GM12878 (cell line): ENCODE measurements at regions of chr1 and their contacts with region 1.

Region 1: DNA sequence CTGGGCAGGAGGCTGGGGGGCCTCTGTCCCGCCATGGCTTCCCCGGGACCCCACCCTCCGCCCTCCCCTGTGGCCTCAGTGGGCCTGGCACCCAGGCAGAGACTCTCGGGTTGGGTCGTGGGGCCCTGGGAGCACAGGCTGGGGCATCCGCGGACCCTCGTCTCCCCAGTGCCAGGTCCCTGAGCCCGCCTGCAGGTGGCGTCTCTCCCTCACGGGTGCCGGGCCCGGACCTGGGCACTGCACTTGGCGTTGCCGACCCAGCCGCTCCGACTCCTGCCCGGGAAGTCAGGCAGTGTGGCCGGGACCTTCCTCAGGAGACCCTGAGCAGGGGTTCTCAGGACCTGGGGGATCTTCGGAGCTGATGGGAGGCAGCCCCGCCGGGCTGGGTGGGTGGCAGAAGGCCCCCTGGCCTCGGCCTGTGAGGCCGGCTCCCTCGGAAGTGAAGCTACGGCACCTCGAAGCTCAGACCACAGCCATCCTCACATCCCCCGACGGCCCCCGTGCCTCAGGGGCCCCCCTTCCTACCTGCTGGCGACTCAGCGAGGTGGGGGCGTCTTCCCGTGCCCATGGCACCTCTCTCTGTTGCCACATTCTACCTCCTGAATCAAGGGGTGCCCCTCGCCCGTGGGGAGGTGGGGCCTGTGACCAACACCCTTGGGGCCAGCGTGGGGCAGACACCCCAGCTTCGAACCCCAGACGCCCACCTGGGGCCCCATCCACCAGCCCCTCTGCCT is 6.4 kb upstream of the C1orf159 start:
- DNase-seq: no peak
- ATAC-seq: peak; percentile 99
- H3K4me3 ChIP-seq: no peak overlapping the region
- H3K27ac ChIP-seq: no peak overlapping the region
- H3K4me1 ChIP-seq: 0 out of 2 replicates have a peak, but pooled peaks cover 4% of the 10 kb centered on the region
- H3K27me3 ChIP-seq: peaks cover 2 to 6% of the 10 kb centered on the region in 2 experiments; a peak in 3 of 4 replicates
- CTCF ChIP-seq: peak; percentile 73 to 98 (median 93); a peak in 5 of 6 replicates
- EP300 ChIP-seq: no peak
- POLR2A ChIP-seq: no peak
- RAD21 ChIP-seq: peak; percentile 89

Region 2: DNA sequence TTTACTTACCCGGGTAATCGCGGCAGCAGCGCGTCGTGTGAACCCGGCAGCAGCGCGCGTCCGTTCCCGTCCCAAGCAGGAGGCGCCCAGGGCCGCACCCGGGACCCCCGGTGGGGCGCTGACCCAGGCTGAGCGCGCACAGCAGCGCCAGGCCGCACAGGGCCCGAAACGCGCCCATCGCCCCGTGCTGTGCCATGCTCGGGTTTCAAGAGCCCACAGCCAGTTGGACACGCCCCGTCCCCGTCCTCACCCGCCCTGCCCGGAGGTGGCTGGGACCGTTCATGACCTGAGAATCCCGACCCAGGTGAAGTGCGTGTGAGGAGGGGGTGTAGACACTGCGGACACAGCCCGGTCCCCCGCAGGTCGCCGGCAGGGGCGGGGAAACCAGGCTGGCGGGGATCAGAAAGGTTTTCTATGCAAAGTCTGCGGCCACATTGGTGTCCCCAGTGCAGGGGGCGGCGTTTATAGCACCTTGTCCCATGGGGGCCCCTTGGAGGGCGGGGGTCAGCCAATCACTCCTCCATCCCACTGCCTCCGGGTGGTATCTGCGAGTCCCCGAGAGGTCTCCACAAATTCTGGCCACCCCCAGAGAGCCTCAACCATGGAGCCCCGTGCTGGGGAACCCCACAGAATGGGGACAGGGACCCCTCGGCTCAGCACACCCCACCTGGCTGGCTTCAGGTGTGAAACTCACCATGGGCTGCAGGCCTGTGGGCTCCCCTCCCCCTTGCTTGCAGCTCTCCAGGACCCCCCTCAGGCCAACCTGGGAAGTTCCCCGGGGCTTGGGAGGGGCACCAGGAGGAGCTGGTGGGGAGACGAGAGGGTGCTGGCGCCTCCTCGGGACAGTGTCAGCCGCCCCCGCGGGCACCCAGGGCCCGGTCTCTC is 84.4 kb after region 1 on chr1 and contains the start of gene TNFRSF18:
- CTCF ChIA-PET with region 1: interaction called, 25 read pairs
- POLR2A ChIA-PET with region 1: interaction called, 5 read pairs
- RAD21 ChIA-PET with region 1: interaction called, 10 read pairs
- SMC1A ChIA-PET with region 1: interaction called, 8 read pairs
- in situ Hi-C with region 1: no loop called
- intact Hi-C with region 1: no loop called
- DNase-seq: no peak
- ATAC-seq: peak; percentile 58
- H3K4me3 ChIP-seq: no peak within 1 kb of the TSS
- H3K27ac ChIP-seq: no peak within 1 kb of the TSS
- H3K4me1 ChIP-seq: peaks cover 28% of the 10 kb centered on the region
- H3K27me3 ChIP-seq: peaks cover 0 to 8% of the 10 kb centered on the region in 2 experiments; a peak in 1 of 4 replicates
- CTCF ChIP-seq: peak in 1 of 3 experiments; percentile 23; a peak in 1 of 6 replicates
- EP300 ChIP-seq: no peak
- POLR2A ChIP-seq: no peak
- RAD21 ChIP-seq: no peak
- polyA plus RNA-seq, gene TNFRSF18: 0.18 TPM in 1 of 2 experiments, not detected in the other

Region 3: DNA sequence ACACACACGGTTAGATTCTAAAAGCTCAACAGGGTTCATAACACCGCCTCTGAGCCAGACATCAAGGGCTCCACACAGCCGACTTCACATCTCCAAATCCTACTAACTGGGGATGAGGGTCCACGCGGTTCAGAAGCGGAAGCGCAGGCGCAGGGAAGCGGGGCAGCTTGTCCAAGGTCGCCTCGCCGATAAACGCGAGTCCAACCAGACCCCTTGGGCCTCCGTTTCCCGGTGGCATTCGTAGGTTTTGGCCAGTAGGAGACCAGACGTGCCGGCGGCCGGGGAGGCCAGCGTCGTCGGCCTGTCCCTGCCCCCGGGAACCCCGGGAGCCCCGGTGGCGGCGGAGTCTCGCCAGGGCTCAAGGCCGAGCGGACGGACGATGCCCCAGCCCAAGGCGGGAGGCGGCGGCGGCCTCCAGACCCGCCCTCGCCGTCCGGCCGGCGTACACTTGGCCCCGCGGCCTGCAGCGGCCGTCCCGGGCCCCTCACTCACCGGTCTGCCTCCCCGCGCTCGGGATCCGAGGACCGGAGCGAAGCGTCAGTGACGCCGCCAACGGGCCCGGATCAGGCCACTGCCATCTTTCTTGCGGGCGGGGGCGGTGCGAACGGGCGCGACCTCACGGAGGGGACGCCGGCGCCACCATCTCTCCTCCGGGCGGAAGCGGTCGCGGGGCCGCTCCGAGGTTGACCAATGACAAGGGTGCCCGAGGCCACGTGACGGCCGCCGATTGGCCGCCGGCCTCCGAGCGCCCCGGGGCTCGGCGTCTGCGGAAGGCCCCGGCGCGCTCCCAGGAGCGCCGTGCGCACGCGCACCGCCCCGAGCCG is 109.4 kb after region 1 on chr1 and contains the start of gene SDF4:
- CTCF ChIA-PET with region 1: interaction called, 21 read pairs
- POLR2A ChIA-PET with region 1: no interaction called
- RAD21 ChIA-PET with region 1: interaction called, 8 read pairs
- SMC1A ChIA-PET with region 1: interaction called, 10 read pairs
- in situ Hi-C with region 1: no loop called
- intact Hi-C with region 1: loop called (anchors 5 kb)
- DNase-seq: peak; percentile 72
- ATAC-seq: peak; percentile 98
- H3K4me3 ChIP-seq: peak within 1 kb of the TSS; percentile 91
- H3K27ac ChIP-seq: peak within 1 kb of the TSS; percentile 93
- H3K4me1 ChIP-seq: peaks cover 4% of the 10 kb centered on the region
- H3K27me3 ChIP-seq: no peaks in the 10 kb centered on the region
- CTCF ChIP-seq: no peak
- EP300 ChIP-seq: no peak
- POLR2A ChIP-seq: peak; percentile 96
- RAD21 ChIP-seq: no peak
- polyA plus RNA-seq, gene SDF4: 0.44 to 2.0 TPM

Region 4: GRCh38 chr1:1285611-1286311 is 163.5 kb after region 1 on chr1:
- CTCF ChIA-PET with region 1: interaction called, 57 read pairs
- POLR2A ChIA-PET with region 1: no interaction called
- RAD21 ChIA-PET with region 1: interaction called, 63 read pairs
- SMC1A ChIA-PET with region 1: interaction called, 23 read pairs
- in situ Hi-C with region 1: no loop called
- intact Hi-C with region 1: loop called (anchors 2 kb)
- DNase-seq: no peak
- ATAC-seq: no peak; the same call in none of the 3 replicates
- H3K4me3 ChIP-seq: no peak overlapping the region
- H3K27ac ChIP-seq: no peak overlapping the region
- H3K4me1 ChIP-seq: no peaks in the 10 kb centered on the region
- H3K27me3 ChIP-seq: no peaks in the 10 kb centered on the region
- CTCF ChIP-seq: no peak
- EP300 ChIP-seq: no peak
- POLR2A ChIP-seq: no peak
- RAD21 ChIP-seq: no peak